ENCODE measurements at regions of chr10 and their contacts with region 1.

Region 1: GRCh38 chr10:70404036-70404786 is at the start of gene EIF4EBP2:
- DNase-seq: peak; percentile 95 to 99 (median 96)
- H3K4me3 ChIP-seq: peak within 1 kb of the TSS; percentile 32 to 78
- H3K4me3 Mint-ChIP-seq: peak within 1 kb of the TSS; percentile 92 to 98 (median 98)
- H3K27ac ChIP-seq: peak within 1 kb of the TSS; percentile 86
- H3K27ac Mint-ChIP-seq: peak within 1 kb of the TSS; percentile 87 to 97 (median 95)
- H3K4me1 ChIP-seq: peaks cover 32% of the 10 kb centered on the region
- H3K4me1 Mint-ChIP-seq: peaks cover 30 to 51% (median 40%) of the 10 kb centered on the region in 4 donors
- H3K27me3 ChIP-seq: no peaks in the 10 kb centered on the region
- H3K27me3 Mint-ChIP-seq: no peaks in the 10 kb centered on the region
- total RNA-seq, gene EIF4EBP2: 54.5 to 56.9 TPM

Region 2: GRCh38 chr10:70169649-70170364 is 234.4 kb before region 1 on chr10:
- CTCF ChIA-PET with region 1: no interaction called
- POLR2A ChIA-PET with region 1: interaction called, 19 read pairs
- intact Hi-C with region 1: loop called (anchors 1 kb)
- DNase-seq: peak in 1 of 5 donors; percentile 38
- H3K4me3 ChIP-seq: peak overlapping the region; percentile 73 to 95
- H3K4me3 Mint-ChIP-seq: peak overlapping the region; percentile 90 to 97 (median 94)
- H3K27ac ChIP-seq: peak overlapping the region; percentile 93
- H3K27ac Mint-ChIP-seq: peak overlapping the region; percentile 90 to 99 (median 96)
- H3K4me1 ChIP-seq: peaks cover 76% of the 10 kb centered on the region
- H3K4me1 Mint-ChIP-seq: peaks cover 39 to 85% (median 54%) of the 10 kb centered on the region in 4 donors
- H3K27me3 ChIP-seq: no peaks in the 10 kb centered on the region
- H3K27me3 Mint-ChIP-seq: no peaks in the 10 kb centered on the region

Region 3: GRCh38 chr10:70381471-70382421 is 22.5 kb before region 1 on chr10:
- CTCF ChIA-PET with region 1: interaction called, 9 read pairs
- POLR2A ChIA-PET with region 1: interaction called, 48 read pairs
- intact Hi-C with region 1: loop called (anchors 1 kb)
- DNase-seq: peak in 1 of 5 donors; percentile 10
- H3K4me3 ChIP-seq: peak overlapping the region; percentile 82 to 88
- H3K4me3 Mint-ChIP-seq: peak overlapping the region; percentile 88 to 92 (median 90)
- H3K27ac ChIP-seq: peak overlapping the region; percentile 16
- H3K27ac Mint-ChIP-seq: peak overlapping the region in 4 of 7 donors; percentile 37 to 70 (median 50)
- H3K4me1 ChIP-seq: peaks cover 13% of the 10 kb centered on the region
- H3K4me1 Mint-ChIP-seq: peaks cover 0 to 14% (median 6%) of the 10 kb centered on the region in 4 donors
- H3K27me3 ChIP-seq: no peaks in the 10 kb centered on the region
- H3K27me3 Mint-ChIP-seq: no peaks in the 10 kb centered on the region

Region 4: DNA sequence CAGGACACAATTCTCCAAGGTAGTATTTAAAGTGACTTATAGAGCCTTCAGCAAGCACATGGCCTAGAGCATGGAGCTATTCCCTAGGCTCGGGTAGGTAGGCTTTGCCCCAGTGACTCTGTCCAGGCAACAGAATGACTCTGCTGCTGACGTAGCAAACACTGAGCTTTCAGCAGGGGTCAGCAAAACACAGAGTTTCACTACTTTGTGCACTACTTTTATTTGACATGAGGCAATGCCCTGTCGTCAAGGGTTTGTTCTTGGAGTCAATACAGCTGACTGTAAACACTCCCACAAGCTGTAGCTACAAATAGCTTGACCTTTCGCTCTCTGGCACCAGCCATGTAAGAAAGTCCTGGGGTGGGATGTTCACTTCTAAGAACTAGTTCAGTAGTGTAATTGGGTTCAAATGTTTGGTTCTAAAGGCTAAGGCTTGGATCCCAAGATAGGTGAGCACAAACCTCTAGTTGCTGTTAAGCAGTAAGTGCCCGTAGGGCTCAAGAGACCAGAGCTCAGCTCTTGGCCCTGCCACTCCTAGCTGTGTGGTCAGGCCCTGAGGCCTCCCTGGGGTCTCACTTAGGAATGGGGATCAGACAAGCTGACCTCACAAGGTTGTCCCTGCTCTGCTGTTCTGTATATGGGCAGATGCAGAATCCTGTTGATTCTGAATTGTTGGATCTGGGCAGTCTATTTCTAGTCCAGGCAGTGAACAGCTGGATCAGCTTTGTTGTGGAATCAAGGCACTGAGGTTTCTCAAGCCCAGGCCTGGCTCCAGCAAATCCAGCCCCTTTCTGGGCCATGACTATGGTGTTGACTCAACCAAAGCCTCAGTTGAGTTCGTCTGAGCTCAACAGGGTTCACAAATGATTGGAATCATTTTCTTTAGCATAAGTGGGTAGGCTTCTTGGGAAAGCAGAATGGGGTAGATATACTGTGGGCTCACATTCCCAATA is 26.6 kb after region 1 on chr10:
- CTCF ChIA-PET with region 1: interaction called, 7 read pairs
- POLR2A ChIA-PET with region 1: interaction called, 22 read pairs
- intact Hi-C with region 1: no loop called
- DNase-seq: no peak
- H3K4me3 ChIP-seq: no peak overlapping the region
- H3K4me3 Mint-ChIP-seq: peak overlapping the region in 1 of 8 donors; percentile 39
- H3K27ac ChIP-seq: no peak overlapping the region
- H3K27ac Mint-ChIP-seq: peak overlapping the region; percentile 52 to 99 (median 94)
- H3K4me1 ChIP-seq: peaks cover 35% of the 10 kb centered on the region
- H3K4me1 Mint-ChIP-seq: peaks cover 16 to 44% (median 35%) of the 10 kb centered on the region in 4 donors
- H3K27me3 ChIP-seq: no peaks in the 10 kb centered on the region
- H3K27me3 Mint-ChIP-seq: no peaks in the 10 kb centered on the region

Measured in CD4-positive, alpha-beta memory T cell (primary cell).